ENCODE measurements at regions of chr17 and their contacts with region 1.

Region 1: DNA sequence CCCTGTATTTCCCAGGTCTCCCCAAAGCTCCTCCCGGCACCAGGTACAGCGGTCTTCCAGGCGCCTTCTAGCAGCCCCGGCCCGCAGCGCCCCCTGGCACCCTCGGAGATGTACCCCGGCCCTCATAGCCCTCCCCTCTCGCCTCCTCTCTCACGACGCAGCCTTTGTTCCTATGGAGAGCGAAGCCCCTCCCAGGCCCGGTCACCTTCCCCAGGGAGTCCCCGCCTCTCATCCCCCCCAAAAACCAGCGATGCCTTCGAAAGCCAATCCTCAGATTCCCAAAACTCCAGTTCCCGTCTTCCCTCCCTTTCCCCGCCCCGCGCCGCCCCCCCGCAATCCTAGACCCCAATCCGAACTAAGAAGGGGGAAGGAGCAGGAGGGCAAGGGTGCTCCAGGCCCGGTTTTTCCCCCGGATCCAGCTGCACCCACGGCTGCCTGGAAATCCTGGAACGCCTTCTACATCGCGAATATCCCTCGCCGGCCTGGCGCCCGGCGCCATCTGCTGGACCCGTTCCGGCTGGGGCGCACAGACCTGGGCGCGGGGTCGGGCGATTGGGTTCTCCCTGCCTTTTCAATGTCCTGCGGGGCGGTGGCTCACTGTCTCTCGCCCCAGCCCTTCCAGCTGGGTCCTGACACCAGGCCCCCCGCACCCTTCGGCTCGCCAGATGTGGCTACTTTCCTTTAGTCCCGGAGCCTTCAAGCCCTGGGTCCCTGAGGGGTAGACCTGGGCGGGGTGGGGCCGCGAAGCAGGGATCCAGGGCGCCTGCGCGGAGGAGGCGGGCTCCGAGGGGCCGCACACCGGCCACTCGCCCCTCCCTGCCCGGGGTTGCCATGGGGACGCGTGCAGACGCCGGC is at the start of gene DNAH2:
- DNase-seq: peak; percentile 97
- H3K4me3 ChIP-seq: peak within 1 kb of the TSS; percentile 72 to 92
- H3K27ac ChIP-seq: peak within 1 kb of the TSS; percentile 61 to 90; a peak in 3 of 4 replicates
- H3K4me1 ChIP-seq: peaks cover 3 to 22% of the 10 kb centered on the region in 2 experiments; a peak in 1 of 4 replicates
- H3K27me3 ChIP-seq: no peaks in the 10 kb centered on the region
- CTCF ChIP-seq: peak; percentile 58
- EP300 ChIP-seq: peak; percentile 7 to 42; a peak in 1 of 4 replicates
- RAD21 ChIP-seq: peak; percentile 45
- polyA plus RNA-seq, gene DNAH2: 0.13 and 0.18 TPM in 2 replicates

Region 2: DNA sequence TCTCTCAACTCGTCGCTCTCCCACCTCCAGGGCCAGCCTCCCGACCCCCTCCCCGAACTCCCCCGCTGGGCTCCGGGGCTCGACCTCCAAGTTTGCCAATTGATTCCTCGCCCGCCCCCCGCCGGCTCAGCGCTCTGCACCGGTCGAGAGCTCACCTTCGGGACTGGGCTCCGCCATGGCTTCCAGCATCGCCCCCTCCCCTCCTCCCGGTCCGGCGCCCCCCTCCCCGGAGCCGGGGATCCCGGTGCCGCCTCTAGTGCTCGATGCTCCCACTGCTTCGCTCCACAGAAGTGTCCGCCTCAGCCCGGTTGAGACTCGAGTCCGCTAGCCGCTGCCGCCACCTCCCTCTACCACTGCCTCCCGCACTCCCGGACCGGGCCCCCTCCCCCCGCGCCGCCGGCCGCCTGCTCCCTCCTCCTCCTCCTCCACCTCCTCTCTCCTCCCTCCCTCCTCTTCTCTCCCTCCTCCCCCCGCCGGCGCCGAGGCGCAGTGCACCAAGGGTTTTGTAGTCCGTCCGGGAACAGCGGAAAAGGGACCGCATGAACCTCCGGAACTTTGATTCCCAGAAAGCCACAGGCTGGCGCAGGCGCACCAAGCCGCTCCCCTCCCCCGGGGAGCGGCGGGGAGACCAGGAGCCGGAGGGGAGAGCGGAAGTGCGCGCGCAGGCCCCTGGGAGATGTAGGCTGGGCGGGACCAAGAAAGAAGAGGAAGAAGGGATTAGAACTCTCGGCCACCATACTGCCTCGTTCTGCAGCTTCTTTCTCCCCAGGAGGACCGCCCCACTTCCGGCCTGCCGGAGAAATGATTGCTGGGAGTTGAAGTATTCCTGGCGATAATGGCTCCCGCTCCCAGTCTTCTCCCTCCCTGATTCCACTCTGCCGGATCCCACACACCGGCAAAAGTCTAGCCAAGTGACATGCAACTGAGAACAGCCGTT is 477.8 kb before region 1 on chr17 and contains the start of gene PHF23:
- CTCF ChIA-PET with region 1: no interaction called
- POLR2A ChIA-PET with region 1: no interaction called
- DNase-seq: peak; percentile 94
- H3K4me3 ChIP-seq: peak within 1 kb of the TSS; percentile 88 to 99
- H3K27ac ChIP-seq: peak within 1 kb of the TSS; percentile 75 to 99
- H3K4me1 ChIP-seq: peaks cover 36 to 41% of the 10 kb centered on the region in 2 experiments
- H3K27me3 ChIP-seq: no peaks in the 10 kb centered on the region
- CTCF ChIP-seq: no peak
- EP300 ChIP-seq: no peak
- RAD21 ChIP-seq: no peak
- polyA plus RNA-seq, gene PHF23: 53.3 and 58.5 TPM in 2 replicates

Region 3: GRCh38 chr17:7703584-7704479 is 13.3 kb before region 1 on chr17:
- CTCF ChIA-PET with region 1: interaction called, 85 read pairs
- POLR2A ChIA-PET with region 1: interaction called, 38 read pairs
- DNase-seq: peak; percentile 86
- H3K4me3 ChIP-seq: peak overlapping the region; percentile 75 to 80
- H3K27ac ChIP-seq: peak overlapping the region; percentile 47 to 86; a peak in 3 of 4 replicates
- H3K4me1 ChIP-seq: peaks cover 9 to 35% of the 10 kb centered on the region in 2 experiments
- H3K27me3 ChIP-seq: no peaks in the 10 kb centered on the region
- CTCF ChIP-seq: no peak
- EP300 ChIP-seq: 0 out of 4 replicates have a peak, but pooled peaks of 1 of the 2 experiments have one; percentile 26
- RAD21 ChIP-seq: no peak

Region 4: GRCh38 chr17:7834962-7835813 is 118.1 kb after region 1 on chr17:
- CTCF ChIA-PET with region 1: interaction called, 10 read pairs
- POLR2A ChIA-PET with region 1: interaction called, 6 read pairs
- DNase-seq: peak; percentile 92
- H3K4me3 ChIP-seq: peak overlapping the region; percentile 90 to 97
- H3K27ac ChIP-seq: peak overlapping the region; percentile 98 to 99
- H3K4me1 ChIP-seq: peaks cover 21 to 27% of the 10 kb centered on the region in 2 experiments
- H3K27me3 ChIP-seq: peaks cover 7% of the 10 kb centered on the region; the same call in 1 of the 2 replicates
- CTCF ChIP-seq: peak; percentile 77
- EP300 ChIP-seq: no peak; a peak in 2 of 4 replicates
- RAD21 ChIP-seq: peak; percentile 75

Measured in SK-N-SH (cell line).